A549 (cell line): ENCODE measurements at regions of chr16 and their contacts with region 1.

Region 1: GRCh38 chr16:76653390-76654026 is 376.3 kb downstream of the CNTNAP4 start:
- DNase-seq: peak; percentile 32 to 66
- ATAC-seq: peak; percentile 88 to 90
- H3K4me3 ChIP-seq: no peak overlapping the region
- H3K27ac ChIP-seq: no peak overlapping the region
- H3K4me1 ChIP-seq: peaks cover 11% of the 10 kb centered on the region
- CTCF ChIP-seq: peak; percentile 64
- EP300 ChIP-seq: no peak
- POLR2A ChIP-seq: no peak
- RAD21 ChIP-seq: peak; percentile 72 to 78

Region 2: GRCh38 chr16:76278980-76279379 is 374.5 kb before region 1 on chr16:
- CTCF ChIA-PET with region 1: interaction called, 33 read pairs
- POLR2A ChIA-PET with region 1: no interaction called
- DNase-seq: peak in 1 of 2 experiments; percentile 26
- ATAC-seq: peak; percentile 54 to 59; a peak in 2 of 6 replicates
- H3K4me3 ChIP-seq: no peak overlapping the region
- H3K27ac ChIP-seq: no peak overlapping the region
- H3K4me1 ChIP-seq: no peaks in the 10 kb centered on the region
- CTCF ChIP-seq: peak; percentile 20; the same call in 1 of the 3 replicates
- EP300 ChIP-seq: no peak
- POLR2A ChIP-seq: no peak
- RAD21 ChIP-seq: peak; percentile 43 to 45; a peak in 3 of 5 replicates

Region 3: GRCh38 chr16:76607317-76607716 is 46.2 kb before region 1 on chr16:
- CTCF ChIA-PET with region 1: no interaction called
- POLR2A ChIA-PET with region 1: no interaction called
- DNase-seq: no peak
- ATAC-seq: no peak
- H3K4me3 ChIP-seq: no peak overlapping the region
- H3K27ac ChIP-seq: no peak overlapping the region
- H3K4me1 ChIP-seq: no peaks in the 10 kb centered on the region
- CTCF ChIP-seq: no peak
- EP300 ChIP-seq: no peak
- POLR2A ChIP-seq: no peak
- RAD21 ChIP-seq: no peak

Region 4: GRCh38 chr16:76665571-76666275 is 12.2 kb after region 1 on chr16:
- CTCF ChIA-PET with region 1: interaction called, 31 read pairs
- POLR2A ChIA-PET with region 1: no interaction called
- DNase-seq: peak in 1 of 2 experiments; percentile 1
- ATAC-seq: no peak
- H3K4me3 ChIP-seq: no peak overlapping the region
- H3K27ac ChIP-seq: no peak overlapping the region
- H3K4me1 ChIP-seq: no peaks in the 10 kb centered on the region
- CTCF ChIP-seq: no peak; the same call in 2 of the 3 replicates
- EP300 ChIP-seq: no peak
- POLR2A ChIP-seq: no peak
- RAD21 ChIP-seq: 0 out of 5 replicates have a peak, but pooled peaks of 1 of the 2 experiments have one; percentile 17

Region 5: GRCh38 chr16:76724181-76724580 is 70.7 kb after region 1 on chr16:
- CTCF ChIA-PET with region 1: no interaction called
- POLR2A ChIA-PET with region 1: no interaction called
- DNase-seq: no peak
- ATAC-seq: no peak
- H3K4me3 ChIP-seq: no peak overlapping the region
- H3K27ac ChIP-seq: no peak overlapping the region
- H3K4me1 ChIP-seq: no peaks in the 10 kb centered on the region
- CTCF ChIP-seq: no peak
- EP300 ChIP-seq: no peak
- POLR2A ChIP-seq: no peak
- RAD21 ChIP-seq: no peak

Region 6: DNA sequence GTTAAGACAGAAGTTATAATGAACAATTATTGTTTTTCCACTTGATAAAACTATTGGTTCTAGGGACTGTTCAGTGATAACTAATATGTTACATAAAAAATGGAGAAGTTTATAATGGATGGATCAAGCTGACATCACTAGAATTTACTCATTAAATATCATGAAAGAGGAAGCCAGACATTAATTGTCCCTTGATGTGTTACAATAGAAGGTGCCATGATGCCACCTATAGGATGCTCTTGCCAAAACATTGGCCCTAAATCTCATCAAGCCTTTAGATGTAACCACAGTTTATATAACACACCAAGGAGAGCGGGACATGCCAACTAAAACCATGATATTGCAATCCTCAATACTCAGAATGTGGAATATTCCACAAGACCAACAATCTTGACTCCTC is 389.6 kb after region 1 on chr16:
- CTCF ChIA-PET with region 1: interaction called, 12 read pairs
- POLR2A ChIA-PET with region 1: no interaction called
- DNase-seq: peak; percentile 14 to 52
- ATAC-seq: peak; percentile 71 to 79; a peak in 4 of 6 replicates
- H3K4me3 ChIP-seq: no peak overlapping the region
- H3K27ac ChIP-seq: no peak overlapping the region
- H3K4me1 ChIP-seq: no peaks in the 10 kb centered on the region
- CTCF ChIP-seq: peak; percentile 74
- EP300 ChIP-seq: no peak
- POLR2A ChIP-seq: no peak
- RAD21 ChIP-seq: peak; percentile 84 to 88